Gastrocnemius medialis (tissue), 4 donors: ENCODE measurements at regions of chr13 and their contacts with region 1.

Region 1: DNA sequence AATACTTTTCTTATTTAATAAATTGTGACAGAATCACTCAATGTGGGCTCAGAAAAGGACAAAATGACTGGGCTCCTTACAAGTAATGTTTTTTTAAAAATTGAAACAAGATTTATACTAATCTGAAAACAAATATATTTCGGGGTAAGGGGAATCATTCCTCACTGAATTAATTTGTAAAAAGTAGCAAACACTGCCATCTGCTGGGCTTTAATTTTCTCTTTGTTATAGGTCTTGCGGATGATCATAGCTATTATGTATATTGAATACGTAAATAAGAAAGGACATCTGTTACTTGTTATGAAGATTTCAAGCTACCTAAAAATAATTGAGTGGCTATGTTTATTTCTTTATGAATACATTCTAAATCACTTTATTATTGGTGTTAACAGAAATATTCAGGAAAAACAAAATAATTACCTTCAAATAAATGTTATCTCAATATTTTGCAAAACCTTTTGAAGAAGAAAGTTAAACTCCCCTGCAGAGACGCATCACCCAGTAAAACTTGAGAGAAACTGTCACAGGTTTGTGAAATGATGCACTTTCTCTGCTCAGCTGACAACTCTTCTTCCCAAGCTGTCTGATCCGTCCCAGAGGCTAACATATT is 17.8 kb upstream of the ENOX1 start:
- DNase-seq: no peak
- ATAC-seq: peak; percentile 47 to 64
- H3K4me3 ChIP-seq: no peak overlapping the region
- H3K27ac ChIP-seq: no peak overlapping the region
- H3K4me1 ChIP-seq: no peaks in the 10 kb centered on the region
- H3K27me3 ChIP-seq: no peaks in the 10 kb centered on the region
- CTCF ChIP-seq: peak; percentile 49 to 81 (median 57)
- POLR2A ChIP-seq: no peak

Region 2: GRCh38 chr13:42594970-42595571 is 1209.5 kb before region 1 on chr13:
- in situ Hi-C with region 1: loop called in 1 of 4 experiments (anchors 25 kb)
- intact Hi-C with region 1: loop called (anchors 10 kb)
- DNase-seq: peak; percentile 17 to 29
- ATAC-seq: peak; percentile 54 to 66
- H3K4me3 ChIP-seq: no peak overlapping the region
- H3K27ac ChIP-seq: no peak overlapping the region
- H3K4me1 ChIP-seq: peaks cover 0 to 4% of the 10 kb centered on the region in 2 donors
- H3K27me3 ChIP-seq: no peaks in the 10 kb centered on the region
- CTCF ChIP-seq: peak; percentile 47 to 82 (median 54)
- POLR2A ChIP-seq: no peak

Region 3: DNA sequence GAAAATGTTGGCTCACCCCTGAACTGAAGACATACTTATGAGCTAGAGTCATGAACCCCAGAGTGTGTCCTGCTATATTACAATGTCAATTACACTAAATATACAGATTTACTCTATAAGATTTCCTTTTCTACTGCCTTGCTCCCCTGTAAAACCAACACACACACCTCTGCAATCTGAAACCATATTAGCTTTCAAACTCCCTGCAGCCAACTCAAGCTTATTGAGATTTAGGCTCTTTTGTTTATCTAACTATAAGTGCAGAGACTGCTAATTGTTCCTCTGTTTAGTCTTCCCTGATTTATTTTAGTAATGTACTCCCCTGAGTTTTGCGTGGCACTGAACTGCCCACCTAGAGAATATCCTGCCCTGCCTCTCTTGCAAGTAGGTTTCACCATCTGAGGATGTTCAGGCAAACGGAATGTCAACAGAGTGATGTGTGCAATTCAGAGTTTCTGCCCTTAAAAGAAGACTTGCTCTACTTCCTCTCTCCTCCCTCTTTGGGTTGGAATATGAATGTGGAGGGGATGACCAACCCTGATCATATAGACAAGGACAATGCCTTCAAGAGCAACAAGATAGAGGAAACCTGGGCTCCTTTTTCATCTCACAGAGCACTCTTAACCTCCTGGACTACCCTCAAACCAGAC is 1000.9 kb before region 1 on chr13:
- in situ Hi-C with region 1: no loop called
- intact Hi-C with region 1: no loop called
- DNase-seq: no peak
- ATAC-seq: no peak
- H3K4me3 ChIP-seq: no peak overlapping the region
- H3K27ac ChIP-seq: no peak overlapping the region
- H3K4me1 ChIP-seq: no peaks in the 10 kb centered on the region
- H3K27me3 ChIP-seq: peaks cover 0 to 2% (median 0%) of the 10 kb centered on the region in 3 donors
- CTCF ChIP-seq: no peak
- POLR2A ChIP-seq: no peak

Region 4: GRCh38 chr13:42969558-42970172 is 834.9 kb before region 1 on chr13:
- in situ Hi-C with region 1: loop called (anchors 10 to 25 kb)
- intact Hi-C with region 1: loop called (anchors 2 kb)
- DNase-seq: peak; percentile 33 to 49
- ATAC-seq: peak; percentile 65 to 82
- H3K4me3 ChIP-seq: no peak overlapping the region
- H3K27ac ChIP-seq: no peak overlapping the region
- H3K4me1 ChIP-seq: no peaks in the 10 kb centered on the region
- H3K27me3 ChIP-seq: no peaks in the 10 kb centered on the region
- CTCF ChIP-seq: peak; percentile 47 to 83 (median 68)
- POLR2A ChIP-seq: no peak

Region 5: GRCh38 chr13:43085545-43085944 is 719.0 kb before region 1 on chr13:
- in situ Hi-C with region 1: loop called in 2 of 4 experiments (anchors 5 to 10 kb)
- intact Hi-C with region 1: loop called (anchors 2 kb)
- DNase-seq: no peak
- ATAC-seq: no peak
- H3K4me3 ChIP-seq: no peak overlapping the region
- H3K27ac ChIP-seq: no peak overlapping the region
- H3K4me1 ChIP-seq: peaks cover 0 to 3% of the 10 kb centered on the region in 2 donors
- H3K27me3 ChIP-seq: no peaks in the 10 kb centered on the region
- CTCF ChIP-seq: peak; percentile 40 to 63 (median 58)
- POLR2A ChIP-seq: no peak

Region 6: GRCh38 chr13:43094901-43095300 is 709.7 kb before region 1 on chr13:
- in situ Hi-C with region 1: loop called in 1 of 4 experiments (anchors 10 kb)
- intact Hi-C with region 1: no loop called
- DNase-seq: no peak
- ATAC-seq: no peak
- H3K4me3 ChIP-seq: no peak overlapping the region
- H3K27ac ChIP-seq: no peak overlapping the region
- H3K4me1 ChIP-seq: no peaks in the 10 kb centered on the region
- H3K27me3 ChIP-seq: no peaks in the 10 kb centered on the region
- CTCF ChIP-seq: no peak
- POLR2A ChIP-seq: no peak

Region 7: DNA sequence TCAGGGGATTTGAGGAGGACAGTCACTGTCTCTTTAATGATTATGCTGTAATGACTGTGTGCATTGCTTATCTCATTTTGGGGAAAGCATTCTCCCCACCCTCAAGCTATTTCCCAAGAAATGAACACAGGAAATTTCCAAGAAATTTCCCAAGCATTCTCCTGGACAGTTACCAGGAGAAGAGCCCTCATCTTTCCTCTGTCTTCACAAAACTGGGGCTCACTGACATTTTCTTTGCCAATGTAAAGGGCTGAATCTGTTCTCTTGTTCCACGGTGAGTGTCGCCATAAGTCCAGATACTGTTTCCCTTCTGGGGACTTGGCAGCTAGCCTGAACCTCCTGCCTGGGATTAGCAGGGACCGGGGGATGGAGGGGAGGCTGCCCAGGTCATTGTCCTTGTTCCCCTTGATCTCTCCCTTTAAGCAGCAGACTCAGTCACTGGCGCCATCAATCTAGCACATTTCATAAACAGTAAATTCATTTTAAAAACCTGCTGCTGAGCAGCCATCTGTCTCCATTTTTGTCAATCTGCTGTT is 608.4 kb before region 1 on chr13:
- in situ Hi-C with region 1: loop called in 1 of 4 experiments (anchors 25 kb)
- intact Hi-C with region 1: loop called (anchors 5 kb)
- DNase-seq: peak in 1 of 2 donors; percentile 33
- ATAC-seq: peak; percentile 57 to 59
- H3K4me3 ChIP-seq: no peak overlapping the region
- H3K27ac ChIP-seq: no peak overlapping the region
- H3K4me1 ChIP-seq: peaks cover 11 to 12% of the 10 kb centered on the region in 2 donors
- H3K27me3 ChIP-seq: no peaks in the 10 kb centered on the region
- CTCF ChIP-seq: peak in 2 of 5 experiments; percentile 10 to 18
- POLR2A ChIP-seq: no peak

Region 8: GRCh38 chr13:43848001-43848649 is 43.6 kb after region 1 on chr13:
- in situ Hi-C with region 1: no loop called
- intact Hi-C with region 1: no loop called
- DNase-seq: no peak
- ATAC-seq: no peak
- H3K4me3 ChIP-seq: no peak overlapping the region
- H3K27ac ChIP-seq: no peak overlapping the region
- H3K4me1 ChIP-seq: no peaks in the 10 kb centered on the region
- H3K27me3 ChIP-seq: no peaks in the 10 kb centered on the region
- CTCF ChIP-seq: no peak
- POLR2A ChIP-seq: no peak